ENCODE measurements at regions of chr16 and their contacts with region 1.

Region 1: DNA sequence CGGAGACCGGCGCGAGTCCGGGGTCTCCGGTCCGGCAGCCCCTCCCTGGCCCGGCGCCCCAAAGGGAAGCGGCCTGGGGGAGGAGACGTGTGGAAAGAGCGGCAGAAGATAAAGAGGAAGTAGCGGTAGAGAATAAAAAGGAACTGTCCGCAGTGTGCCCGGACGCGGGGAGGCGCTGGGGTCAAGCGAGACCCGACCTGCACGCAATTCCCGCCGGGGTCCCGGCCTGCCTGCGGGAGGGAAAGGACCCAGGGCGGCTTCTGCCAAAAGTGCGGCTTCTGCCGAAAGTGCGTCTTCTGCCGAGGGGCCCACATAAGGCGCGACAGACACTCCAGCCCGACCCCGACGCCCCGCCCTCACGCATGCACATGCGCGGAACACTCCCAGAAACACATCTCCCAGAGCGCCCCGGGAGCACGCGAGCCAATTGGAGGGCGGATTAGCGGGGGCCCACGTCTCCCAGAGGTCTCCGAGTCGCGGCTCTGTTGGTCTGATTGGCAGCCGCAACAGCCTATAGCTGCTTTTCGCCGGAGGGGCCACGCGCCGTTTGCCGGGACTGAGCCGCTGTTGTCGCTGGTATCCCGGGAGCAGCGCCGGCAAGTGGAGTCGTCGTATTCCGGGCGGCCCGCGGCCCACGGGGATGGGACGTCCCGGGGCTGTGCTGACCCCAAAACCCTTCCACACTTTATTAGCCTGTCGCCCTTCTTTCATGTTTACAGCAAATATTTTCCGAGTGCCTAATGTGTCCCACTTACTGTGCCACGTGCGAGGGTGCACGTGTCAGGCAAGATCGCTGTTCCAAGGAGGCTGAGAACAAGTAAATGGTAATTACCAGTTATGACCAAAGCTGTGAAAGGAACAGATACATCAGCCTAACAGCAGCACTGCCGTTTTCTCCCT is 8.0 kb upstream of the MEFV start:
- DNase-seq: peak; percentile 97
- ATAC-seq: peak; percentile 96

Region 2: GRCh38 chr16:3282730-3283524 is 18.5 kb after region 1 on chr16 and contains the start of gene ZNF263:
- intact Hi-C with region 1: loop called (anchors 2 kb)
- DNase-seq: peak; percentile 97
- ATAC-seq: peak; percentile 98
- total RNA-seq, gene ZNF263: 31.4 TPM